Mammary epithelial cell (primary cell): ENCODE measurements at regions of chr22 and their contacts with region 1.

Region 1: DNA sequence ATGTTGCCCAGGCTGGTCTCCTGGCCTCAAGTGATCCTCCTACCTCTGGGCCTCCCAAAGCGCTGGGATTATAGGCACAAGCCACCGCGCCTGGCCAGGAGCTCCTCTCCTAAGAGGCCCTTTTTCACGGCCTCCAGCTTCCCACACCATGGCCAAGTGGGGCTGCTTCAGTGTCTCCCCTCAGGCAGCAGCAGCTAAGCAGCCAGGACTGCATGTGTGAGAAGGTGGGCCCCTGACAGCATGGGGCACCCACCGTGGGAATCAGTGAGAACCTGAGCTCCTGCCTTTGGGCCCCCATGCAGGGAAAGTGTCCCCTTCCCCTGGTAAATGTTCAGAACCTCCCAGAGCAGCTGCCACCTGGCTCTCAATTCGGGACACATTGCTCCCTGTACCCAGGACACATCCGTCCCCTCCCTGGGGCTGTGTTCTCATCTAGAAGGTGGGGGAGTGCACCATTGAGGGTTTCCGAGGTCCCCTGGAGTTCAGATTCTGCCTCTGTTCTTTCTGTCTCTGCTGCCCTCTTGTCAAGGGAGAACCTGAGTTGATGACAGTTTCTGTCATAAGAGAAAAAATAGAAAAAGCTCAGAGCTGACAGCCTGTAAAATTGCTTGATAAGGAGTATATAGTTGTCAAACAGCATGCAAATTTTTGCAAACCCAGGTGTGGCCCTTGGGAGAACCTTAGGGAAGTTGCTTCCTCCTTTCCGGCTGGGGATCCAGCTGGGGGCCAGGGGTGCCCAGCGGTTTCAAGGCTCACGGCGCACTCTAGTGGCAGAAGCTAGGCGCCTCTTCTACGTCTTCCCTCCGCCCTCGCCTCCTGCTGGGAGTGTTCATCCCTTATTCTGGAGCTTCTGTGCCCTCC is 29.7 kb downstream of the FAM83F start:
- DNase-seq: peak; percentile 35
- H3K4me3 ChIP-seq: no peak overlapping the region
- H3K27ac ChIP-seq: no peak overlapping the region
- H3K4me1 ChIP-seq: peaks cover 55% of the 10 kb centered on the region
- H3K27me3 ChIP-seq: no peaks in the 10 kb centered on the region
- CTCF ChIP-seq: peak; percentile 66 to 88

Region 2: DNA sequence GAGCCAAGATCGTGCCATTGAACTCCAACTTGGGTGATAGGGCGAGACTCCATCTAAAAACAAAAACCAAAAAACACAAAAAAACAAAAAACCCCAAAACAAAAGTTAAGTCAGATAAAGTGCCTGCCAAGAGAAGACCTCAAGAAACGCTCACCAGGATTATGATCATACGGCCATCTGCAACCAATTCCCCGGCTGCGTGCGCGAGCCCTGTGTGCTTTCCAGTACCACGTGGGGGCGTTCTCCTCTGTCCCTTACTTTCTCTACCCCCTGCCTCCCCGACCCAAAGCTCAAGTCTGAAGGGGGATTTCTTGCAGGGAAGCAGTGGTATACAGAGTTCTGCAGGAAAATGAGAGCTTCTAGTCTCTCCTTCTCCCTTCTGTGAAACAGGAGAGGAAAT is 481.3 kb before region 1 on chr22:
- CTCF ChIA-PET with region 1: no interaction called
- dilution Hi-C with region 1: no loop called
- in situ Hi-C with region 1: loop called in 1 of 2 experiments (anchors 5 kb)
- intact Hi-C with region 1: no loop called
- DNase-seq: no peak
- H3K4me3 ChIP-seq: no peak overlapping the region
- H3K27ac ChIP-seq: no peak overlapping the region
- H3K4me1 ChIP-seq: no peaks in the 10 kb centered on the region
- H3K27me3 ChIP-seq: no peaks in the 10 kb centered on the region
- CTCF ChIP-seq: peak; percentile 33 to 54

Region 3: GRCh38 chr22:39818094-39818493 is 206.3 kb before region 1 on chr22:
- CTCF ChIA-PET with region 1: no interaction called
- dilution Hi-C with region 1: no loop called
- in situ Hi-C with region 1: no loop called
- intact Hi-C with region 1: loop called (anchors 10 kb)
- DNase-seq: no peak
- H3K4me3 ChIP-seq: no peak overlapping the region
- H3K27ac ChIP-seq: no peak overlapping the region
- H3K4me1 ChIP-seq: peaks cover 10% of the 10 kb centered on the region
- H3K27me3 ChIP-seq: no peaks in the 10 kb centered on the region
- CTCF ChIP-seq: no peak

Region 4: DNA sequence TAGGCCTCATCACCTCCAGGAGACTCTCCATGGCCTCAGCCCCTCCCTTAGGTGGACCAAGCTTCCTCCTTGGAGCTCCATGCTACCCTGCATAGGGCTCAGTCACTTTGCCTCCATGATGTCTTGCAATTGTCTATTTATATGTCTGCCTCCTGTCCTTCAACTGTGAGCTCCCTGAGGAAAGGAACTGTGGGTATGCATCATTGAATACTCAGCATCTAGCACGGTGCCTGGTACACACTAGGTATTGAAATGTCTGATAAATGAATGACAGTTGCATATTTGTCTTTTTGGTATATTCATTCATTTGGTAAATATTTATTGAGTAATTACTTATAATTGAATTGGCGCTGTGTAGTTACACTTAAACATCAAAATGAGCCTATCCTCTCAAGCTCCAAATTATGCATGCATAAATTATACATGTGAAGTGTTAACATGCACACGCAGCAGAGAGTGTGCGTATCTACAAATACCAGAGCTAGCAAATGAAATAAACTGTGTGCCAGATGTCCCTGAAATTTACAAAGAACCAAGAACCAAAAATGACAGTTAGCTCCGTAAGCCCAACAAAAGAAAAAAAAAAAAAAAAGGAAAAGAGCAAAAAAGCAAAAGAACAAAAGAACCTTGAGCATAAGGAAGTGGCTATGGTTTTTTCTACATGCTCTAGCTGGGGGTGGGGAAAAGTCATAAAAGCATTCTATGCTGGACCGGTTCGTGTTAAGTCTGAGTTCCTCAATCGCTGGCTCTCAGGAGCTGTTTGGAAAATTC is 98.3 kb before region 1 on chr22:
- CTCF ChIA-PET with region 1: no interaction called
- dilution Hi-C with region 1: no loop called
- in situ Hi-C with region 1: no loop called
- intact Hi-C with region 1: no loop called
- DNase-seq: no peak
- H3K4me3 ChIP-seq: no peak overlapping the region
- H3K27ac ChIP-seq: no peak overlapping the region
- H3K4me1 ChIP-seq: peaks cover 18% of the 10 kb centered on the region
- H3K27me3 ChIP-seq: no peaks in the 10 kb centered on the region
- CTCF ChIP-seq: no peak

Region 5: DNA sequence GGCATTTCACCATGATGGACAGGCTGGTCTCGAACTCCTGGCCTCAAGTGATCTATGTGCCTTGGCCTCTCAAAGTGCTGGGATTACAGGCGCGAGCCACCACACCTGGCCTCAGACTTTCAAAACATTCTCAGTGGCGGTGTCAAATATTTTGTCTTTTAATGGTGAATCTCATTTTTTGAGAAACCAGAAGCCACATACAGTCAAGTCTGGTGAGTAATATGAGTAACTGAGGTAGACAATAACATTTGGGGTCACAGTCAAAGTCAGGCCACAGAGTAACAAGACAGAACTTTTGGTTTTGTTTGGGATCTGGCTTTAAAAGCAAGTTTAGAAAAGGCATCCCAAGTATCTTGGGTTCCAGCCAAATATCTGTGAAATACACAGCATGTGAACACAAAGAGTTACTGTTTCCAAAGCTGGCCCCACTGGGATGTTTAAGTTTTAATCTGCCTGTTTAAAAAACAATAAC is 69.8 kb before region 1 on chr22:
- CTCF ChIA-PET with region 1: interaction called, 5 read pairs
- dilution Hi-C with region 1: no loop called
- in situ Hi-C with region 1: no loop called
- intact Hi-C with region 1: loop called (anchors 2 kb)
- DNase-seq: peak; percentile 80
- H3K4me3 ChIP-seq: no peak overlapping the region
- H3K27ac ChIP-seq: no peak overlapping the region
- H3K4me1 ChIP-seq: peaks cover 14% of the 10 kb centered on the region
- H3K27me3 ChIP-seq: no peaks in the 10 kb centered on the region
- CTCF ChIP-seq: no peak

Region 6: GRCh38 chr22:39997939-39998338 is 26.5 kb before region 1 on chr22:
- CTCF ChIA-PET with region 1: no interaction called
- dilution Hi-C with region 1: no loop called
- in situ Hi-C with region 1: no loop called
- intact Hi-C with region 1: loop called (anchors 1 kb)
- DNase-seq: peak; percentile 93
- H3K4me3 ChIP-seq: peak overlapping the region; percentile 4 to 90 (median 6)
- H3K27ac ChIP-seq: peak overlapping the region; percentile 60
- H3K4me1 ChIP-seq: peaks cover 71% of the 10 kb centered on the region
- H3K27me3 ChIP-seq: no peaks in the 10 kb centered on the region
- CTCF ChIP-seq: no peak